Spleen (tissue), 13 donors: ENCODE measurements at regions of chr9 and their contacts with region 1.

Region 1: GRCh38 chr9:108761655-108762347 is 94.0 kb downstream of the ACTL7B start:
- DNase-seq: no peak
- H3K4me3 ChIP-seq: no peak overlapping the region
- H3K27ac ChIP-seq: no peak overlapping the region
- H3K4me1 ChIP-seq: peaks cover 0 to 17% (median 6%) of the 10 kb centered on the region in 6 donors
- H3K27me3 ChIP-seq: no peaks in the 10 kb centered on the region
- CTCF ChIP-seq: peak; percentile 44 to 89 (median 81)
- POLR2A ChIP-seq: no peak

Region 2: GRCh38 chr9:107421947-107422793 is 1339.6 kb before region 1 on chr9:
- intact Hi-C with region 1: loop called (anchors 5 kb)
- DNase-seq: peak; percentile 78
- H3K4me3 ChIP-seq: no peak overlapping the region
- H3K27ac ChIP-seq: no peak overlapping the region
- H3K4me1 ChIP-seq: peaks cover 5 to 13% (median 8%) of the 10 kb centered on the region in 6 donors
- H3K27me3 ChIP-seq: peaks cover 0 to 15% (median 0%) of the 10 kb centered on the region in 7 donors
- CTCF ChIP-seq: peak in 10 of 11 experiments; percentile 22 to 72 (median 62)
- POLR2A ChIP-seq: no peak

Region 3: DNA sequence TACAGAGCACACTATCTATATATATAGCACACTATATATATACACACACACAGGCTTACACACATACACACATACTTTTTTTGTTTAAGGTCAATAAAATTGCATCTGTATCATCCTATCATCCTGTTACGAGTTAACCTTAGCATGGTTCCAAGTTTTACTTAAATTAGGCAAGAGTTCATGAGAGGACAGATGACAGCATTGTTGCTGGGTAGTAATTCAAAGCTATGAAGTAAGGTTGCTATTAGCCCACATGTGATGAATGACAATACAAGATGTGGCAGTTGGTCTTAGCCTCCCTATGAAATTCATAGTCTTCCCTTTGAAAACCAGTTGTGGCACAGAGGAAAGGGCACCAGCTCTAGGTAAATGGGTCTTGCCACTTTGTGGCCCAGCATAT is 344.1 kb before region 1 on chr9:
- intact Hi-C with region 1: no loop called
- DNase-seq: no peak
- H3K4me3 ChIP-seq: no peak overlapping the region
- H3K27ac ChIP-seq: no peak overlapping the region
- H3K4me1 ChIP-seq: no peaks in the 10 kb centered on the region
- H3K27me3 ChIP-seq: no peaks in the 10 kb centered on the region
- CTCF ChIP-seq: no peak
- POLR2A ChIP-seq: no peak

Region 4: DNA sequence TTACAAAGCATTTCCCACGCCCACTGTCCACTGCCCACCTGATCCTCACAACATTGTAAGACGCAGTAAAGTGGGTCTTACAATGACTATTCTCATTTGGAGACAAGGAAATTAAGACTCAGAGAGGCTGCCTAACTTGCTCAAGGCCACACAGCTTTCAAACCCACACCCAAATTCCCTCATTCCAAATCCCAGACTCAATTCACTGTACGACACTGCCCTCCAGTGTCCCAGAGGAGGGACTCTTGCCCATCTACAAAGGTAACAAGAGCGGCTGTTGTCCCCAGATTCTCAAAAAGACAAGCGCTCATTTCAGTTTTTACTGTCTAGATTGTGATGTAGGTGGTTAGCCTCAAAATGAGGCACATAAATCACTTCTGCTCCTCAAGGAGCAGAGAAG is 90.6 kb before region 1 on chr9:
- intact Hi-C with region 1: no loop called
- DNase-seq: no peak
- H3K4me3 ChIP-seq: no peak overlapping the region
- H3K27ac ChIP-seq: no peak overlapping the region
- H3K4me1 ChIP-seq: no peaks in the 10 kb centered on the region
- H3K27me3 ChIP-seq: no peaks in the 10 kb centered on the region
- CTCF ChIP-seq: no peak
- POLR2A ChIP-seq: no peak

Region 5: DNA sequence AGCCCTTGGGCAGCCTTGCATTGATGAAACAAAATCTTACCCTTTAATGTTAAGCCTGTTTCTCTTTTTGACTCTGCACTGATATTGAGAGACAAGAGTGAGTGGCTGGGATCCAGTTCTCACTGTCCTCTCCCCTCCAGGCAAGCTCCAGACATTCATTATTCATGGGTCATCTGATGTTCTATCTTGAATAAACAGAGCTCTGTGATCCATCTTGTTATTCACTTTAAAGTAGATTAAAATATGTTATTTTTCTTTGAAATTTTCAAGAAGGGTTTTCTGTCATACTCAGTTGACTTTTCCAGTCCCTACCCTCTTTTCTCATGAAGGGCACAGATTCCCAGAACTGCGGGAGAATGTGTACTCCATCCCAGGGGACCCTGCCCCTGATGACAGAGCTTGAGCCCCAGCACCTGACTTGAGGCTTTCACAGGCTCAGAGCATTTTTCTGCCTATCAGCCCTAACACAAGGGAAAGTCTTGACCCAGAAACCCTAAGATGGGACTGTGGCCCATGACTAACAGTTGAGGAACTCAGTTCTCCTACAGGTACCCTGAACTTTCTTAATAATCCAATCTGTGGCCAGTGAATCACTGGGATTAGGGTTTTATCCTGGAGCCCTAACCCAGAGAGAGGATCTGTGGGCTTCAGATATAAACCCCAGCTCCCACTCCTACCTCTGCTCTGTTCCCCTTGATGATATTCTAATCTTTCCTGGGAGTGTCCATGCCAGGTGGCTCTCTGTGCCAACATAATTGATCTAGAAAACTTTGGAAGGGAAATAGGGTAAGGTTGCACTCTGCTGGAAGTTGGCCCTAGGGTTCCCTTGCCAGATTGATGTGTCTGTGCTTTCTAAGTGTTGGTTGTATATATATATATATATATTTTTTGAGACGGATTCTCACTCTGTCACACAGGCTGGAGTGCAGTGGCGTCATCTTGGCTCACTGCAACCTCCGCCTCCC is 70.0 kb after region 1 on chr9:
- intact Hi-C with region 1: no loop called
- DNase-seq: no peak
- H3K4me3 ChIP-seq: no peak overlapping the region
- H3K27ac ChIP-seq: no peak overlapping the region
- H3K4me1 ChIP-seq: peaks cover 0 to 19% (median 2%) of the 10 kb centered on the region in 6 donors
- H3K27me3 ChIP-seq: no peaks in the 10 kb centered on the region
- CTCF ChIP-seq: no peak
- POLR2A ChIP-seq: no peak